Sigmoid colon (tissue), 7 donors: ENCODE measurements at regions of chr4 and their contacts with region 1.

Region 1: DNA sequence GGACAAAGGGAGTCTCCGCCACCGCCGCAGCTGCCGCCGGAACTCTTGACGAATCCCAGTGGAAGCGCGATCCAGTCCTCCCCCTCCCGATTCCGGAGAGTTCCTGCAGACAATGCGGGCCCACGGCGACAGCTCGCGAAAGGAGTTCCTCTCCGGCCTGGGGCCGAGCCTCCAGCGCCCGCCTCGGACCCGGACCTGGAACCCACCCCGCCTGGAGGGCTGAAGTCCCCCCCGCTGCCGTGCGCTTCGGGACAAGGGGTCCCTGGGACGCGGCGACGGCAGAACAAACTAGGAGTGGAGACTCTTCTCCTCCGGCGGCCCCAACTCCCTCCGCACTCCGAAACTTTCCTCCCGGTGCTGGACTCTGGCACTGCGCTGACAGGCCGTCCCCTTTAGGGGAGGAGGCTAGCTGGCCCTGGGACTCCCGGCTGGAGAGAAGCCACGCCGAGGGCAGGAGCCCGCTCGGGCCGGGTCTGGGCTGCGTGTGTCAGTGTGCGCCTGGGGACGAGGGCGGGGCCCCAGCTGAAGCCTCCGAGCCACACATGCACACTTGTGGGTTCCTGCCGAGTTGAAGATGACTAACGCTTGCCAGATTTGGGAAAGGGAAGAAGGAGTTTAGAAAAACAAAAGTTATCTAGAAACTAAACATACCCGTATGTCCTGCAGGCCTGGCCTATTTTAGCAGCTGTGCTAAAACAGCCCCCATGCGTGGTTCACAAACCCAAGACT is at the start of gene ANTXR2:
- DNase-seq: peak; percentile 96
- H3K4me3 ChIP-seq: peak within 1 kb of the TSS; percentile 76 to 95 (median 87)
- H3K27ac ChIP-seq: peak within 1 kb of the TSS; percentile 94 to 97 (median 95)
- H3K4me1 ChIP-seq: peaks cover 0 to 50% (median 39%) of the 10 kb centered on the region in 4 donors
- H3K27me3 ChIP-seq: no peaks in the 10 kb centered on the region
- CTCF ChIP-seq: peak in 1 of 4 experiments; percentile 11
- EP300 ChIP-seq: peak in 2 of 4 donors; percentile 0 to 28
- POLR2A ChIP-seq: peak; percentile 57 to 73
- total RNA-seq, gene ANTXR2: 170 to 237 (median 212) TPM

Region 2: DNA sequence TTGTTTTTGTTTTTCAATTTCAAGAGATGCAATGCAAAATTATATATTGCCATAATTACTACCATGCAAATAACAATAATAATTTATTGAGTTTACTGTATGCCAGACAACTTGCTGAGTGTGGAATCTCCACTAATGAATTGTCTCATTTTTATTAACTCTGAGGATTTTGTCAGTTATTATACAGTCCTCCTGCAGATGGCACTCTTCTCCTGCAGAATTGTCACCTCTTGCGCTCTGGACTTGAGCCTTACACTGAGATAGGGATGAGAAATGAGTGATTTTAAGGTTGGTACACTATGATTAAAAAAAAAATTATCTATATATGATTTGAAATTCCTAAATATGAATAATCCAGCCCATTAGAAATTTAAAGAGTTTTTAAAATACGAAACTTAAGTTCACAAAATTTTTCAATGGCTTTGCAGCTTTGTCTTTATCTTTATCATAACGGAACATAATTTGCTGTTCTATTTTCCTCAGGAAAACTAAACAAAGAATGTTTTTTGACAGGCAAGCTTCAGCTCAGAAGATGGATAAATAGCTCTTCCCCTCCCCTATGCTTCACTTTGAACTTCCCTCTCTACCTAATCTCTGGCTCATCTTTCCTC is 1120.9 kb before region 1 on chr4:
- intact Hi-C with region 1: loop called (anchors 5 kb)
- DNase-seq: no peak
- H3K4me3 ChIP-seq: no peak overlapping the region
- H3K27ac ChIP-seq: no peak overlapping the region
- H3K4me1 ChIP-seq: no peaks in the 10 kb centered on the region
- H3K27me3 ChIP-seq: no peaks in the 10 kb centered on the region
- CTCF ChIP-seq: peak; percentile 53 to 69 (median 64)
- EP300 ChIP-seq: no peak
- POLR2A ChIP-seq: no peak

Region 3: GRCh38 chr4:79623021-79623870 is 449.7 kb before region 1 on chr4:
- intact Hi-C with region 1: loop called (anchors 5 kb)
- DNase-seq: peak; percentile 73
- H3K4me3 ChIP-seq: peak overlapping the region in 3 of 4 donors; percentile 20 to 37 (median 30)
- H3K27ac ChIP-seq: peak overlapping the region; percentile 73 to 82 (median 78)
- H3K4me1 ChIP-seq: peaks cover 0 to 59% (median 36%) of the 10 kb centered on the region in 4 donors
- H3K27me3 ChIP-seq: no peaks in the 10 kb centered on the region
- CTCF ChIP-seq: no peak
- EP300 ChIP-seq: peak in 3 of 4 donors; percentile 70 to 85 (median 73)
- POLR2A ChIP-seq: no peak

Region 4: GRCh38 chr4:79923281-79923680 is 149.6 kb before region 1 on chr4:
- intact Hi-C with region 1: loop called (anchors 10 kb)
- DNase-seq: no peak
- H3K4me3 ChIP-seq: no peak overlapping the region
- H3K27ac ChIP-seq: no peak overlapping the region
- H3K4me1 ChIP-seq: peaks cover 0 to 21% (median 6%) of the 10 kb centered on the region in 4 donors
- H3K27me3 ChIP-seq: no peaks in the 10 kb centered on the region
- CTCF ChIP-seq: no peak
- EP300 ChIP-seq: no peak
- POLR2A ChIP-seq: no peak

Region 5: GRCh38 chr4:80112236-80112635 is 39.3 kb after region 1 on chr4:
- intact Hi-C with region 1: no loop called
- DNase-seq: peak; percentile 72
- H3K4me3 ChIP-seq: no peak overlapping the region
- H3K27ac ChIP-seq: peak overlapping the region in 1 of 4 donors; percentile 47
- H3K4me1 ChIP-seq: no peaks in the 10 kb centered on the region
- H3K27me3 ChIP-seq: no peaks in the 10 kb centered on the region
- CTCF ChIP-seq: no peak
- EP300 ChIP-seq: no peak
- POLR2A ChIP-seq: no peak

Region 6: GRCh38 chr4:80184053-80184790 is 111.3 kb after region 1 on chr4:
- intact Hi-C with region 1: loop called (anchors 1 kb)
- DNase-seq: peak; percentile 95
- H3K4me3 ChIP-seq: peak overlapping the region; percentile 55 to 80 (median 71)
- H3K27ac ChIP-seq: peak overlapping the region; percentile 76 to 86 (median 85)
- H3K4me1 ChIP-seq: peaks cover 0 to 29% (median 19%) of the 10 kb centered on the region in 4 donors
- H3K27me3 ChIP-seq: no peaks in the 10 kb centered on the region
- CTCF ChIP-seq: peak; percentile 89 to 95 (median 92)
- EP300 ChIP-seq: no peak
- POLR2A ChIP-seq: no peak